ENCODE measurements at regions of chr22 and their contacts with region 1.

Region 1: GRCh38 chr22:36123673-36124630 is 36.6 kb downstream of the APOL3 start:
- DNase-seq: peak; percentile 52
- ATAC-seq: peak; percentile 100
- H3K4me3 ChIP-seq: peak overlapping the region; percentile 26; the same call in 1 of the 2 replicates
- H3K27ac ChIP-seq: no peak overlapping the region
- H3K4me1 ChIP-seq: no peaks in the 10 kb centered on the region
- H3K27me3 ChIP-seq: no peaks in the 10 kb centered on the region
- CTCF ChIP-seq: peak; percentile 98 to 99 (median 99); a peak in 5 of 6 replicates
- EP300 ChIP-seq: no peak
- POLR2A ChIP-seq: 0 out of 2 replicates have a peak, but pooled peaks have one; percentile 30
- RAD21 ChIP-seq: peak; percentile 96

Region 2: DNA sequence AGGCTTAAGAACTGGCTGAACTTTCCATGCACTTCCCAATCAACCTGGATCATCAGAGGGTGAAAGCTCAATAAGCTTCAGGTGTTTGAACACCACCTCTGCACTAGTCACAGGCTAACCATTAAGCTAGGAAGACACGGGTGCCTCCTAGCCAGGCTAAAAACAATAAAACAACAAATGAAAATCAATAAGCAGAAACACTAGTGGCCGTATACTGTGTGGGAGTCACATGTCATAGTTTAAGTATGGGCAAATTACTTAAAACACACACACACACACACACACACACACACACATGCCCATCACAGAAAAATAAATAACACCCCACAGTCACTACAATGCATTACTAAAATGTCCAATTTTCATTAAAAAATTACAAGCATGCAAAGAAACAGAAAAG is 321.1 kb before region 1 on chr22:
- CTCF ChIA-PET with region 1: no interaction called
- POLR2A ChIA-PET with region 1: no interaction called
- RAD21 ChIA-PET with region 1: no interaction called
- SMC1A ChIA-PET with region 1: no interaction called
- in situ Hi-C with region 1: no loop called
- intact Hi-C with region 1: no loop called
- DNase-seq: no peak
- ATAC-seq: no peak
- H3K4me3 ChIP-seq: no peak overlapping the region
- H3K27ac ChIP-seq: no peak overlapping the region
- H3K4me1 ChIP-seq: no peaks in the 10 kb centered on the region
- H3K27me3 ChIP-seq: no peaks in the 10 kb centered on the region
- CTCF ChIP-seq: no peak
- EP300 ChIP-seq: no peak
- POLR2A ChIP-seq: no peak
- RAD21 ChIP-seq: no peak

Region 3: GRCh38 chr22:35930933-35931332 is 193.0 kb before region 1 on chr22:
- CTCF ChIA-PET with region 1: interaction called, 8 read pairs
- POLR2A ChIA-PET with region 1: no interaction called
- RAD21 ChIA-PET with region 1: interaction called, 3 read pairs
- SMC1A ChIA-PET with region 1: interaction called, 3 read pairs
- in situ Hi-C with region 1: loop called (anchors 5 kb)
- intact Hi-C with region 1: loop called (anchors 1 kb)
- DNase-seq: peak; percentile 24
- ATAC-seq: peak; percentile 87
- H3K4me3 ChIP-seq: no peak overlapping the region
- H3K27ac ChIP-seq: no peak overlapping the region
- H3K4me1 ChIP-seq: no peaks in the 10 kb centered on the region
- H3K27me3 ChIP-seq: no peaks in the 10 kb centered on the region; a peak in 1 of 4 replicates
- CTCF ChIP-seq: peak; percentile 52 to 70 (median 53); a peak in 5 of 6 replicates
- EP300 ChIP-seq: no peak
- POLR2A ChIP-seq: no peak
- RAD21 ChIP-seq: peak; percentile 68

Region 4: GRCh38 chr22:35995772-35996171 is 128.2 kb before region 1 on chr22:
- CTCF ChIA-PET with region 1: no interaction called
- POLR2A ChIA-PET with region 1: no interaction called
- RAD21 ChIA-PET with region 1: no interaction called
- SMC1A ChIA-PET with region 1: no interaction called
- in situ Hi-C with region 1: no loop called
- intact Hi-C with region 1: no loop called
- DNase-seq: no peak
- ATAC-seq: no peak
- H3K4me3 ChIP-seq: no peak overlapping the region
- H3K27ac ChIP-seq: no peak overlapping the region
- H3K4me1 ChIP-seq: no peaks in the 10 kb centered on the region
- H3K27me3 ChIP-seq: no peaks in the 10 kb centered on the region; a peak in 2 of 4 replicates
- CTCF ChIP-seq: no peak
- EP300 ChIP-seq: no peak
- POLR2A ChIP-seq: no peak
- RAD21 ChIP-seq: no peak

Region 5: DNA sequence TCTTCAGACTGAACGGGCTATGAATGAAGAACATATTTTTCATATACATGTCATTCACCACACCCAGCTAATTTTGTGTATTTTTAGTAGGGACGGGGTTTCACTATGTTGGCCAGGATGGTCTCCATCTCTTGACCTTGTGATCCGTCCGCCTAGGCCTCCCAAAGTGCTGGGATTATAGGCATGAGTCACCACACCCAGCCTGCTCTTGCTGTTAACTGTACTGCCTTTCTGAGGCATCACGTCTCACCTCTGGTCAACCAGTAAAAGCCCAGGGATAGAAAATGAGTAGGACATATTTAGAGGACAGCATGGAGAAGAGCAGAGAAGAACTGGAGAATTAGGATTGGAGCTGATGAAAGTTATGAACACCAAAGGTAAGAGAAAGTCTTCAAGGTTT is 19.0 kb before region 1 on chr22:
- CTCF ChIA-PET with region 1: no interaction called
- POLR2A ChIA-PET with region 1: no interaction called
- RAD21 ChIA-PET with region 1: no interaction called
- SMC1A ChIA-PET with region 1: no interaction called
- in situ Hi-C with region 1: no loop called
- intact Hi-C with region 1: no loop called
- DNase-seq: no peak
- ATAC-seq: no peak
- H3K4me3 ChIP-seq: no peak overlapping the region
- H3K27ac ChIP-seq: no peak overlapping the region
- H3K4me1 ChIP-seq: peaks cover 12% of the 10 kb centered on the region
- H3K27me3 ChIP-seq: no peaks in the 10 kb centered on the region
- CTCF ChIP-seq: no peak
- EP300 ChIP-seq: no peak
- POLR2A ChIP-seq: no peak
- RAD21 ChIP-seq: no peak